ENCODE measurements at regions of chr5 and their contacts with region 1.

Region 1: GRCh38 chr5:176447982-176448608 is at the start of gene FAF2:
- DNase-seq: peak; percentile 88
- ATAC-seq: peak; percentile 95
- H3K4me3 ChIP-seq: peak within 1 kb of the TSS; percentile 94 to 100 (median 99)
- H3K27ac ChIP-seq: peak within 1 kb of the TSS; percentile 86
- H3K4me1 ChIP-seq: peaks cover 39% of the 10 kb centered on the region
- H3K27me3 ChIP-seq: peaks cover 0 to 3% of the 10 kb centered on the region in 2 experiments; a peak in 1 of 5 replicates
- CTCF ChIP-seq: peak; percentile 97
- EP300 ChIP-seq: peak in 1 of 2 experiments; percentile 55; a peak in 2 of 4 replicates
- POLR2A ChIP-seq: peak; percentile 87 to 93
- RAD21 ChIP-seq: peak; percentile 48; the same call in 1 of the 2 replicates
- total RNA-seq, gene FAF2: 21.5 and 34.3 TPM in 2 replicates

Region 2: GRCh38 chr5:174618032-174618324 is 1830.1 kb before region 1 on chr5:
- CTCF ChIA-PET with region 1: no interaction called
- POLR2A ChIA-PET with region 1: no interaction called
- in situ Hi-C with region 1: no loop called
- intact Hi-C with region 1: no loop called
- DNase-seq: no peak
- ATAC-seq: no peak
- H3K4me3 ChIP-seq: no peak overlapping the region
- H3K27ac ChIP-seq: no peak overlapping the region
- H3K4me1 ChIP-seq: no peaks in the 10 kb centered on the region
- H3K27me3 ChIP-seq: no peaks in the 10 kb centered on the region
- CTCF ChIP-seq: no peak
- EP300 ChIP-seq: no peak
- POLR2A ChIP-seq: no peak
- RAD21 ChIP-seq: no peak

Region 3: GRCh38 chr5:175718401-175719108 is 729.5 kb before region 1 on chr5:
- CTCF ChIA-PET with region 1: no interaction called
- POLR2A ChIA-PET with region 1: no interaction called
- in situ Hi-C with region 1: no loop called
- intact Hi-C with region 1: no loop called
- DNase-seq: no peak
- ATAC-seq: peak; percentile 81
- H3K4me3 ChIP-seq: no peak overlapping the region
- H3K27ac ChIP-seq: no peak overlapping the region
- H3K4me1 ChIP-seq: peaks cover 7% of the 10 kb centered on the region
- H3K27me3 ChIP-seq: peaks cover under 1 to 3% of the 10 kb centered on the region in 2 experiments; a peak in 1 of 5 replicates
- CTCF ChIP-seq: peak; percentile 76
- EP300 ChIP-seq: no peak
- POLR2A ChIP-seq: no peak
- RAD21 ChIP-seq: peak; percentile 54; the same call in 1 of the 2 replicates

Region 4: GRCh38 chr5:175867587-175868347 is 580.3 kb before region 1 on chr5:
- CTCF ChIA-PET with region 1: no interaction called
- POLR2A ChIA-PET with region 1: no interaction called
- in situ Hi-C with region 1: loop called (anchors 25 kb)
- intact Hi-C with region 1: no loop called
- DNase-seq: peak; percentile 90
- ATAC-seq: peak; percentile 43
- H3K4me3 ChIP-seq: peak overlapping the region in 2 of 3 experiments; percentile 12 to 48; a peak in 3 of 6 replicates
- H3K27ac ChIP-seq: peak overlapping the region; percentile 70
- H3K4me1 ChIP-seq: peaks cover 86% of the 10 kb centered on the region
- H3K27me3 ChIP-seq: no peaks in the 10 kb centered on the region
- CTCF ChIP-seq: peak; percentile 70
- EP300 ChIP-seq: peak; percentile 34 to 85; a peak in 2 of 4 replicates
- POLR2A ChIP-seq: peak in 1 of 2 experiments; percentile 18; a peak in 1 of 4 replicates
- RAD21 ChIP-seq: peak; percentile 82

Region 5: DNA sequence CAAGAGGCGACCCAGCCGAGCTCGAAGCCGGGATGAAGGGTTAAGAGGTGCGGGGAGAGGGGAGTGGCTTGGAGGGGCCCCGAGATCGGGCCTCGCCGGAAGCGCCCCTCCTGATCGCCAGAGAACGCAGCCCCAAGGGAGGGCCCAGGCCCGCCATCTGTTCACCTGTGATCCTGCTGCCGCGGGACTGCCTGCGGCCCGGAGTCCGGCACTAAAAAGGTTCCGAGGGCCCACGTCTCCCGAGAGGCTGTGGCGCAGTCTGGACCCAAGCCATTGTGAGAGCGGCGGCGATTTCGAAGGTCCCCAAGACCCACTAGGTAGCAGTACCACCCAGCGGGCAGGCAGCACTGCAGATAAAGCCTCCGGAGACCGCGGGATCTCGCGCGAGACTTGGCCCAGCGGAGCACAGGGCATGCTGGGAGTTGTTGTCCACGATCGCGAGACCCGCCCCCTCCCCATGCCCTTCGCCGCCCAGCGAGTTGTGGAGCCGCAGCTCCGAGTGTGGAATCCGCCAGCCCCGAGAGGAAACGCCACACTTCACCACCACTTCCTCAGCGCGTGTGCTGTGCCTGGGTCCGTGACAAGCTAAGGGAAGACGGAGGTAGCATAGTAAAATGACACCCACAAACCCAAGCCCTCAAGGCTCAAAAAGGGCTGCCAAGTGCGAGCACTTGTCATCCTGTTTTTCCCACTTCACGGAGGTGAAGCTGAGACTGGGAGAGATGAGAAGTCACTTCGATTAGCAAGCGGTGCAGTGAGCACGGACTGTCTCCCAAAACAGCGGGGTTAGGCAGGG is 86.5 kb before region 1 on chr5 and contains the start of gene KIAA1191:
- CTCF ChIA-PET with region 1: no interaction called
- POLR2A ChIA-PET with region 1: interaction called, 11 read pairs
- in situ Hi-C with region 1: no loop called
- intact Hi-C with region 1: no loop called
- DNase-seq: peak; percentile 86
- ATAC-seq: peak; percentile 98
- H3K4me3 ChIP-seq: peak within 1 kb of the TSS; percentile 76 to 91 (median 87)
- H3K27ac ChIP-seq: peak within 1 kb of the TSS; percentile 60
- H3K4me1 ChIP-seq: peaks cover 45% of the 10 kb centered on the region
- H3K27me3 ChIP-seq: peaks cover 3 to 6% of the 10 kb centered on the region in 2 experiments; a peak in 4 of 5 replicates
- CTCF ChIP-seq: peak; percentile 69
- EP300 ChIP-seq: peak in 1 of 2 experiments; percentile 49; a peak in 2 of 4 replicates
- POLR2A ChIP-seq: peak; percentile 98 to 100
- RAD21 ChIP-seq: peak; percentile 71
- total RNA-seq, gene KIAA1191: 63.6 and 81.6 TPM in 2 replicates

Region 6: DNA sequence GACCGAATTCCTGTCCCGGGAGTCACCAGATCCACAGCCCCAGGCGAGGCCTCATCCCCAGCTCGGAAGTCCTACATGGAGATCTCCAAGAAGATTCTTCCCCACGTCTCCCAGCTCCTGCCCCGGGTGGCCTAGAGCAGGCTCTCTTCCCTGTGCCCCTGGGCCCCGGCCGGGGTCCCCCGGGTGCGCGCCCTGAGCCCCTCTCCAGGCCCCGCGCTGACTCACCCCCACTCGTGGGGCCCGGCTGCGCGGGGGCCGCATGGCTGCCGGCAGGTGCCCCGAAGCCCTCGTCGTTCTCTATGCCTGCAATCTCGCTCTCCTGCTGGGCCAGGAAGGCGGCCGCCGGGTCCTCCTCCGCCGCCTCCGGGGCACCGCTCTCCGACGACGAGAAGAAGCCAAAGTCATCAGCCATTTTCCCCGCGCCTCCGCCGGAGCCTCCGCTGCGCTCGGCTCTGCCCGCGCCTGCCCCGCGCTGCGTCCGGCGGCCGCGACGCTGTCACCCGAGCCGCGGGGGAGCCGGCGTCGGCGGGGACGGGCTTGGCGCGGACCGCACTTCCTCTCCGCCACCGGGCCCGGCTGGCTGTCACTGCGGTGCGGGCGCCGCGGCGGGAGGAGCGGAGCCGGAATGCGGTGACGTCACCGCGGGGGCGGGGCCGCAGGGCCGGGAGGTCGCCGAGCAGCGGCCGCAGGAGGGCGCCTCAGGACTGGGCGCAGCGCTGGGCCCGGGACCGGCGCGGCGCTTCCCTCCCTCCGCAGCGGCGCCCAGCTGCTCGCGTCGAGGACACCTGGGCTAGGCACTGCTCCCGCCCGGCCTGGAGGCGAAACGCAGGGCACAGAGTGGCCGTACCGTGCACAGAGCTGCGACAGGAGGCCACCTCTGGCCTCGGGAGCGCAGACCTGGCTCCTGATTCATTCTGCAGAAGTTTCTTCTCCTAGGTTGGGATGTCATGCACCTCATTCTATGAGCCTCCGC is 31.9 kb before region 1 on chr5 and contains the start of gene CLTB:
- CTCF ChIA-PET with region 1: interaction called, 17 read pairs
- POLR2A ChIA-PET with region 1: interaction called, 9 read pairs
- in situ Hi-C with region 1: no loop called
- intact Hi-C with region 1: loop called (anchors 1 kb)
- DNase-seq: peak; percentile 74
- ATAC-seq: peak; percentile 98
- H3K4me3 ChIP-seq: peak within 1 kb of the TSS; percentile 75 to 85 (median 83)
- H3K27ac ChIP-seq: peak within 1 kb of the TSS; percentile 30
- H3K4me1 ChIP-seq: peaks cover 32% of the 10 kb centered on the region
- H3K27me3 ChIP-seq: no peaks in the 10 kb centered on the region
- CTCF ChIP-seq: peak; percentile 83
- EP300 ChIP-seq: no peak
- POLR2A ChIP-seq: peak in 1 of 2 experiments; percentile 32; a peak in 1 of 4 replicates
- RAD21 ChIP-seq: peak; percentile 100
- total RNA-seq, gene CLTB: 30.7 and 33.8 TPM in 2 replicates

Region 7: GRCh38 chr5:176429972-176430371 is 18.1 kb before region 1 on chr5:
- CTCF ChIA-PET with region 1: interaction called, 4 read pairs
- POLR2A ChIA-PET with region 1: interaction called, 5 read pairs
- in situ Hi-C with region 1: no loop called
- intact Hi-C with region 1: loop called (anchors 2 kb)
- DNase-seq: peak; percentile 60
- ATAC-seq: peak; percentile 98
- H3K4me3 ChIP-seq: peak overlapping the region in 1 of 3 experiments; percentile 17; a peak in 3 of 6 replicates
- H3K27ac ChIP-seq: no peak overlapping the region
- H3K4me1 ChIP-seq: peaks cover 34% of the 10 kb centered on the region
- H3K27me3 ChIP-seq: no peaks in the 10 kb centered on the region
- CTCF ChIP-seq: peak; percentile 66
- EP300 ChIP-seq: no peak
- POLR2A ChIP-seq: no peak
- RAD21 ChIP-seq: peak; percentile 23; the same call in 1 of the 2 replicates

Region 8: DNA sequence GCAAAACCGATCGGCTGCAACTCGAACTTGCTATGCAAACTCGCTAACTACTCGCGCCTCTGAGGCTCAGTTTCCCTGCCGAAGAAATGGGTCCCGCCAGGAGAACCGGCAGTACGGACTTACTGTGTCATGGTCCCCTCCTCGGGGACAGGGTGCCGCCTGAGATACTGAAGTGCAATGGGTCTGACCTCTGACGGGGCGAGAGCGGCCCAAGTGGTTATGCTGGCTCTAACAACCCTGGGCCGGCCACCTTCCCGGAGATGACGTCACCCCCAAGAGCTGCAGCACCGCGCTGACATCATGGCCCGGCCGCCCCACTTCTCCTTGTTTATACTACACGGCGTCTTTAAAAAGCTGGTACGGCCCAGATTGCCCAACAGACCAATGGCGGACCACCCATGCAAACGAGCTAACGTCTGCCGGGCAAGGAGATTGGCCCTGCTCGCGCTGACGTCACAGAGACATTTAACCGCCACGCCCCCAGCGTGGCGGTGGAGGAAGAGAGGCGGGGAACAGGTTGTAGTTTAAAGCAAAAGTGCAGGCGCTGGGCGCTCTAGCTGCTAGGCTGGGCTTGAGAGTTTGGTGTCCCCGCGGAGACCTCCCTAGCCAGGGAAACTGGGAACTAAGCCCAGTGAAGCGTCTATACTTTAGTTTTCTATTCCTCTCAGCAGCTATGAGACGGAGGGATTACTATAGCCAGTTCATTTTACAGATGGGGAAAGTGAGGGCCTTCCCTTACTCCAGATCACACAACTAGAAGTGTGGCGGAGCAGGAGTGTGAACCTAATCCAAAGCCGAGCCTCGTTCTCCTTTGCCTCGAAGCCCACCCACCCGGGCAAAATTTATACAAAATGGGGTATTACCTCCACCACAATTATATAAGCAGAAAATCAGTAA is 89.8 kb after region 1 on chr5:
- CTCF ChIA-PET with region 1: no interaction called
- POLR2A ChIA-PET with region 1: interaction called, 13 read pairs
- in situ Hi-C with region 1: no loop called
- intact Hi-C with region 1: no loop called
- DNase-seq: peak; percentile 98
- ATAC-seq: peak; percentile 67
- H3K4me3 ChIP-seq: peak overlapping the region; percentile 90 to 98 (median 97)
- H3K27ac ChIP-seq: peak overlapping the region; percentile 95
- H3K4me1 ChIP-seq: peaks cover 69% of the 10 kb centered on the region
- H3K27me3 ChIP-seq: no peaks in the 10 kb centered on the region; a peak in 1 of 5 replicates
- CTCF ChIP-seq: no peak
- EP300 ChIP-seq: 0 out of 4 replicates have a peak, but pooled peaks of 1 of the 2 experiments have one; percentile 20
- POLR2A ChIP-seq: peak in 1 of 2 experiments; percentile 74; a peak in 2 of 4 replicates
- RAD21 ChIP-seq: 0 out of 2 replicates have a peak, but pooled peaks have one; percentile 6

Measured in HepG2 (cell line).